ENCODE measurements at regions of chr6 and their contacts with region 1.

Region 1: DNA sequence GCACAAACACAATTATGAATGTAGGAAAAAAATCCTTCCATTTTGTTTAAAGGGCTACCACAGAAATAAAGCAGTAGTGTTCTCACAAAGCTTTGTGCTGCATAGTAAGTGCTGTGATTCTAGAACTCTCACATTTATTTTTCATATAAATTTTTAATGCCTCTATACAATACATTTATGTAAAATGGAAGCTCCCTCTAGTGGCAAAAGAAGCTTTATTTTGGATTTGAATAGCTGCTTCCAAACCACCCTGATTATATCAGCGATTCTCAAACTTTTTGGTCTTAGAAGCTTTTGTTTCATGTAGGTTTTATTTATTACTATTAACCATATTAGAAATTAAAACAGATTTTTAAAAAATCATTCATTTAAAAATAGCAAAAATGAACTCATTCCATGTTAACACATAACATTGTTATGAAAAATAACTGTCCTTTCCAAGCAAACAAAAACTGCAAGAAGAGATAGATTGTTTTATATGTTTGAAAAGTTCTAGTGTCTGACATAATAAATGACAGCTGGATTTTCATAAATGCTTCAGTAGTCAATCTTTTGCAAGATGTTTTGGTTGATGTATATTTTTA is 38.4 kb downstream of the HS3ST5 start:
- DNase-seq: no peak
- H3K4me3 ChIP-seq: no peak overlapping the region
- CTCF ChIP-seq: peak; percentile 20

Region 2: GRCh38 chr6:114288701-114289495 is 15.5 kb before region 1 on chr6:
- CTCF ChIA-PET with region 1: interaction called, 11 read pairs
- POLR2A ChIA-PET with region 1: no interaction called
- DNase-seq: no peak
- H3K4me3 ChIP-seq: no peak overlapping the region
- CTCF ChIP-seq: no peak

Measured in AG04449 (cell line).